ENCODE measurements at regions of chr1 and their contacts with region 1.

Region 1: GRCh38 chr1:206912445-206913095 is 9.2 kb downstream of the FCMR start:
- DNase-seq: peak in 1 of 3 donors; percentile 73
- ATAC-seq: peak; percentile 65 to 82 (median 69)
- H3K4me3 ChIP-seq: no peak overlapping the region
- H3K27ac ChIP-seq: no peak overlapping the region
- H3K4me1 ChIP-seq: peaks cover 0 to 5% (median 0%) of the 10 kb centered on the region in 4 donors
- H3K27me3 ChIP-seq: no peaks in the 10 kb centered on the region
- CTCF ChIP-seq: peak; percentile 88 to 89 (median 88)
- POLR2A ChIP-seq: no peak

Region 2: DNA sequence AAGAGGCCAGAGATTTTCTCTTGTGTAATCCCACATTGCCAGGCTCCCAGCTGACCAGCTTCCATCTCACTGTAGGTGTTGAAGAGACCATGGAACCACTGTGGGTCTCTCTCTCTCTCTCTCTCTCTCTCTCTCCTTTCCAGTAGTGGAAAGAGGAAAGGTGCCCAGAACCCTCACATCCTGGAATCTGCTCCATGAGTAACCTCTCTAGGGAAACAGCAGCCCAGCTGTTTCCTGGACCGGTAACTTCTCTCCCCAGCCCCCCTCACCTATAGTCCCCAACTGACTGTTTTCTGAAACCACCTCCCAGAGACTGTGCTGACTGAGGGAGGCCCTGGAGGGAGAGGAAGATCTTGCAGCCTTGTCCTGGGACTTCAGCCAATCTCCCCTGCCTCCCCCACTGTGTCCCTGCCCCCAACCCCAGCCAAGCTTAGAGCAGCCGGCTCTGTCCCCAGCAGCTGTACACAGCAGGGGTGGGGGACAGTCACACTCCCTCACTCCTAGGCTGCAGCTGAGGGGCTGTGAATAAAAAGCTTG is 1211.6 kb before region 1 on chr1:
- intact Hi-C with region 1: no loop called
- DNase-seq: no peak
- ATAC-seq: peak in 3 of 4 donors; percentile 13 to 30 (median 24)
- H3K4me3 ChIP-seq: no peak overlapping the region
- H3K27ac ChIP-seq: no peak overlapping the region
- H3K4me1 ChIP-seq: peaks cover 0 to 72% (median 12%) of the 10 kb centered on the region in 4 donors
- H3K27me3 ChIP-seq: no peaks in the 10 kb centered on the region
- CTCF ChIP-seq: no peak
- POLR2A ChIP-seq: no peak

Region 3: DNA sequence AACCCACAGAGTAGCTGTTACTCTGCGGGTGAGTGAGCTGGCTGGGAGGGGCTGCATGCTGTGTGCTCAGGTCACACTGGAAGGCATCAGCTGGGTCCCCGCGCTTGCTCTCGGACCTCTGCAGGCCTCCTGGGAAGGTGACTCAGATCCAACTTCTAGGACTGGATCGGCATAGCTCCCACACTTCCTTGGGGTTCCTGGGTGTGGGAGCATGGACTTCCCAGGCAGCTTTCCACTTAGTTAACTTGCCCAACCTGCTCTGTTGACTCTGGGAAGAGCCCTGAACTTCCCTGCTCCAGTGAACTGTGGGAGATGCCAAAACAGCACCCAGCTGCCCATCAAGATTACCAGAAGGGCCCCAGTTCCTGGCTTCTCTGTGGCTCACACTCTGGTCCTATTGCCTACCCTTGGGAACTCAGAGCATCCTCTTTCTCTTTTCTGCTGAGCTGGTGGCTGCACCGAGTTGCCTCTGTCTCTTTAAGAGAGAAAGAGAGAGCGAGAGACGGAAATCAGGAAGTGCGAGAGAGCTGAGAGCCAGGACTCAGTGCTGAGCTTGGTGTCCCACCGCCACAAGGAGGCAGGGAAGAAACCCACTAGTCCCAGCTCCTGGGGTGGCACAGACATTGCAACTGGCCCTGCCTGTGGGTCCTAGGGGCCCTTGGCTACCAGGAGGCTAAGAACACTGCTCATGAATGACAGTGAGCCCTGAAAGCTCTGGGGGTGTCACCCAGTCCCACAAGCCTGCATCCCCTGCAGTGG is 442.5 kb before region 1 on chr1 and contains the start of gene IKBKE:
- intact Hi-C with region 1: loop called in 1 of 2 experiments (anchors 10 kb)
- DNase-seq: peak in 2 of 3 donors; percentile 44 to 54
- ATAC-seq: peak; percentile 73 to 83 (median 77)
- H3K4me3 ChIP-seq: peak within 1 kb of the TSS; percentile 45 to 55 (median 55)
- H3K27ac ChIP-seq: peak within 1 kb of the TSS in 1 of 3 donors; percentile 34
- H3K4me1 ChIP-seq: peaks cover 0 to 10% (median 0%) of the 10 kb centered on the region in 4 donors
- H3K27me3 ChIP-seq: no peaks in the 10 kb centered on the region
- CTCF ChIP-seq: peak in 1 of 4 donors; percentile 12
- POLR2A ChIP-seq: peak; percentile 39
- total RNA-seq, gene IKBKE: 0.86 to 2.7 (median 1.9) TPM

Region 4: DNA sequence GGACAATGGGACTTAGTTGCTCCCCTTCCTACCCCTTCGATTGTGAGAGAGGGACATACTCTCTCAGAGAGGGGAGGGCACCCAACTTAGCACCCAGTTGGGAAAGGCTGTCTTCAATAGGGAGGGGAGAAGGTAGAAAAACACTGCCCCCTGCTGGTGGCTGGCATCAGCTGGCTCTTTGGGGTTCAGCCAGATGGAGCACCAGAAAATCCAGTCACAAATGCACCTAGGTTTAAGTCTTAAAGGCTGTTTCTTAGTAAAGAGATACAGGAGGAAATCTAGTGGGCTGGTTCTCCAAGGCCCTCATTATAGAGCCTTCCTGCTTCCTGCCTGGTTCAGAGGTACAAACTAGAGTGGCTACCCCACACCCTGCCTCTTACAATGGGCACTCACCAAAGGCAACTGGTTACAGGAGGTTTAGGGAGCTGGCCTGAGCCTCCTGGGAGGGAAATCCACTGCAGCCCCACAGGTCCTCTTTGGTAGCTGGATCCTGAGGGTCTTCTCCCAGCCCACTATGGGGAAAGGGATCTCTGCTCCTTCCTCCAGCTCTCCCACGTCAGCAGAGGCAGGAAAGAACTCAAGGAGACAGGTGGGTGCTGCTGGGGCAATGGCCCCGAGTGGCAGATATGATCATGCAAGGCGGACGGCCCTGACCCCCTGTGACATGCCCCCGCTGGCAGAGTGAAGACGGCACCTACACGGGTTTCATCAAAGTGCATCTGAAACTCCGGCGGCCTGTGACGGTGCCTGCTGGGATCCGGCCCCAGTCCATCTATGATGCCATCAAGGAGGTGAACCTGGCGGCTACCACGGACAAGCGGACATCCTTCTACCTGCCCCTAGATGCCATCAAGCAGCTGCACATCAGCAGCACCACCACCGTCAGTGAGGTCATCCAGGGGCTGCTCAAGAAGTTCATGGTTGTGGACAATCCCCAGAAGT is 328.6 kb before region 1 on chr1:
- intact Hi-C with region 1: no loop called
- DNase-seq: peak; percentile 71 to 82 (median 72)
- ATAC-seq: peak; percentile 55 to 74 (median 70)
- H3K4me3 ChIP-seq: no peak overlapping the region
- H3K27ac ChIP-seq: no peak overlapping the region
- H3K4me1 ChIP-seq: no peaks in the 10 kb centered on the region
- H3K27me3 ChIP-seq: no peaks in the 10 kb centered on the region
- CTCF ChIP-seq: peak; percentile 89 to 93 (median 91)
- POLR2A ChIP-seq: no peak

Region 5: DNA sequence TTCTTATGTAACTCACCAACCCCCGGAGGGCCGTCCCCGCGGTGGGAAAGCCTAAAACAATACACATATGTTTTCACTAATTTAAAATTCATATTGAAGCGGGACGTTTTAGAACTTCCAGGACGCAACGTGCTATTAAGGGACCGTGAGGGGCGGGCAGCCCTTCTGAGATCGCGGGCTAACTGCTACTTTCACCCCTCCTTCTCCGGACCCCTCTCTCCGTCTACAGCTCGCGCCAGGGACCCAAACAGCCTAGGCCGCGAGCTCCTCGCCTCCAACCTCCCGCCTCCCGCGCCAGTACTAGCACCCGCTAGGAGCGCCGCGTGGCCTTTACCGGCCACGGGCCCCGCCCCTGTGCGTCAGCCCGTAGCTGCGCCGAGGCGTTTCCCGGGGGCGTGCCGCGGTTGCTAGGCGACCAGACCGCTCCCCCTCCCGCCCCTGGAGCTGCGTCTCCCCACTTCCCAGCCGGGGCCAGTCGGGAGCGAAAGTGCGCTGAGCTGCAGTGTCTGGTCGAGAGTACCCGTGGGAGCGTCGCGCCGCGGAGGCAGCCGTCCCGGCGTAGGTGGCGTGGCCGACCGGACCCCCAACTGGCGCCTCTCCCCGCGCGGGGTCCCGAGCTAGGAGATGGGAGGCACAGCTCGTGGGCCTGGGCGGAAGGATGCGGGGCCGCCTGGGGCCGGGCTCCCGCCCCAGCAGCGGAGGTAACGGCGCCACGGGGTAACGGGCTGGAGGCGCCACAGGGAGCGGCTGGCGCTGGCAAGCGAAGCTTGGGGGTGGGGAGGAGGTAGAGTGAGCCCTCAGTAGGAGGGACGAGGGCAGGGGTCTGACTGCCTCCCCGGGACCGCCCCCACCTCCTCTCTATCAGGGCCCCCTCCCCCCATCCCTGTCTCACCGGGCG is 277.2 kb before region 1 on chr1 and contains the start of gene DYRK3:
- intact Hi-C with region 1: loop called in 1 of 2 experiments (anchors 10 kb)
- DNase-seq: peak; percentile 98
- ATAC-seq: peak; percentile 97 to 98 (median 97)
- H3K4me3 ChIP-seq: peak within 1 kb of the TSS; percentile 82 to 91 (median 87)
- H3K27ac ChIP-seq: peak within 1 kb of the TSS; percentile 60 to 80 (median 68)
- H3K4me1 ChIP-seq: peaks cover 0 to 17% (median 0%) of the 10 kb centered on the region in 4 donors
- H3K27me3 ChIP-seq: no peaks in the 10 kb centered on the region
- CTCF ChIP-seq: peak in 1 of 4 donors; percentile 10
- POLR2A ChIP-seq: peak; percentile 96
- total RNA-seq, gene DYRK3: 2.8 to 5.6 (median 4.0) TPM

Region 6: DNA sequence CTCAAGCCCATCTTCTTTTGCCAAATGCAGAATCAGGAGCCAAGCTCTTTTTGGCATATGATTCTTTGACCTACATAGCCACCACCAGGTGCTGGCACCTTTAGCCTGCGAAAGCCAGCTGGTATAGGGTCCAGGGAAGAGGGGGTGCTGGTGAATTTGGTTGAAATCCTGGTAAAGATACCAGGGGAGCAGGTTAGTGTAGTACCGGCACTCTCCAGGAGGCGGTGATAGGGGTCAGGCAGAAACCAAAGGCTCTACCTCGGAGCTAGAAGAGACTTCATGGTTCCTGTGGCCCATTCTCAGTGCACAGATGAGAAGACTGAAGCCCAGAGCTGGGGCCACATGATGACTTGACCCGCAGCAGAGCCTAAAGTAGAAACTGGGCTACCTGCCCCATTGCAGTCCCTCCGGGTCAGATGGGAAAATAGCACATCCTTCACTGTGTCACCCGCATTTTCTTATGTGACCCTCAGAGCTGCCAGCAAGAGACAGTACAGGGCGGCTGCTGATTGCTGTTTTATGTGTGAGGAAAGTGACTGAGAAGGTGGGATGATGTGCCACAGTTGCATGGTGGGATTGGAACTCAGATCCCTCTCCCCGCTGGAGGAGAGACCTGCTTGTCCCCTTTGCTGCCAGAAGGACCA is 177.9 kb before region 1 on chr1:
- intact Hi-C with region 1: loop called (anchors 10 kb)
- DNase-seq: no peak
- ATAC-seq: peak; percentile 53 to 64 (median 54)
- H3K4me3 ChIP-seq: no peak overlapping the region
- H3K27ac ChIP-seq: no peak overlapping the region
- H3K4me1 ChIP-seq: peaks cover 0 to 12% (median 0%) of the 10 kb centered on the region in 4 donors
- H3K27me3 ChIP-seq: no peaks in the 10 kb centered on the region
- CTCF ChIP-seq: peak; percentile 52 to 70 (median 58)
- POLR2A ChIP-seq: no peak

Region 7: GRCh38 chr1:206784471-206784903 is 128.1 kb before region 1 on chr1:
- intact Hi-C with region 1: no loop called
- DNase-seq: no peak
- ATAC-seq: peak in 1 of 4 donors; percentile 36
- H3K4me3 ChIP-seq: no peak overlapping the region
- H3K27ac ChIP-seq: no peak overlapping the region
- H3K4me1 ChIP-seq: no peaks in the 10 kb centered on the region
- H3K27me3 ChIP-seq: no peaks in the 10 kb centered on the region
- CTCF ChIP-seq: no peak
- POLR2A ChIP-seq: no peak

Region 8: DNA sequence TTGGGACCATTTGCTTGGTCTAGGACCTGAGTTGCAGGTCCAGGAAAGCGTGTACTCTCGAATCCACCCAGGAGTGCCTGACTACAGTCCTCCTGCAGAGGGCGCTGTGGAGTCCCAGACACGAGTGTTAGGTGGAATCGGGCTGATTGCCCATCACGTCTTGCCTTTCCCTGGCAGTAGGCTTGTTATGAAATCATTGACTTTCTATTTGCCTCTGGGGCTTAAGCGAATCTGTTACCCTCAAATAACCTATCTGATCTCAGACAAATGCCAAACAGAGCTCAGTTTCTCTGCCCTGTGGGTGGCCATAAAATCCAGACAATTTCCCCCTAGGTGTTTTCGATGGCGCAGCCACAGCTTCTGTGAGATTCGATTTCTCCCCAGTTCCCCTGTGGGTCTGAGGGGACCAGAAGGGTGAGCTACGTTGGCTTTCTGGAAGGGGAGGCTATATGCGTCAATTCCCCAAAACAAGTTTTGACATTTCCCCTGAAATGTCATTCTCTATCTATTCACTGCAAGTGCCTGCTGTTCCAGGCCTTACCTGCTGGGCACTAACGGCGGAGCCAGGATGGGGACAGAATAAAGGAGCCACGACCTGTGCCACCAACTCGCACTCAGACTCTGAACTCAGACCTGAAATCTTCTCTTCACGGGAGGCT is 47.4 kb before region 1 on chr1 and contains the start of gene IL20:
- intact Hi-C with region 1: loop called in 1 of 2 experiments (anchors 10 kb)
- DNase-seq: peak; percentile 92 to 95 (median 92)
- ATAC-seq: peak; percentile 98 to 100 (median 98)
- H3K4me3 ChIP-seq: no peak within 1 kb of the TSS
- H3K27ac ChIP-seq: peak within 1 kb of the TSS in 1 of 3 donors; percentile 3
- H3K4me1 ChIP-seq: peaks cover 0 to 4% (median 2%) of the 10 kb centered on the region in 4 donors
- H3K27me3 ChIP-seq: no peaks in the 10 kb centered on the region
- CTCF ChIP-seq: peak; percentile 91 to 99 (median 96)
- POLR2A ChIP-seq: no peak
- total RNA-seq, gene IL20: not detected

Region 9: DNA sequence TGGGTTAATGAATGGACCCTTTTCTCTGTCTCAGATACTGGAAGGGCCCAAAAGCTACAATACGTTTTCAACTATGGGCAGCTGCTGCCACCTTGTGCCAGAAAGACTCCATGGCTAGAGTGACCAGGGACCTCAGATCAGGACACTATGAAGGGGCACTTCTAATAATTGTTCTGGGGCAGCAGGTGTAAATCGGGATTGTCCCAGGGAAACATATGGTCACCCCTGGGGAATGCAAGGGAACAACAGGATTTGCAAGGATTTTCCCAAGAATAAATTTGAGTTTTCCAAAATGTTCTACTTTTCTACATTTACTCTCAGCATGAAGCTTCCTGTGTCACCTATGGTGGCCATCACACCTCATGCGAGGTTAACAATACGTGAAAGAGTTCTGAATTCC is 69.6 kb after region 1 on chr1:
- intact Hi-C with region 1: no loop called
- DNase-seq: peak in 2 of 3 donors; percentile 44 to 58
- ATAC-seq: peak; percentile 92 to 94 (median 92)
- H3K4me3 ChIP-seq: no peak overlapping the region
- H3K27ac ChIP-seq: no peak overlapping the region
- H3K4me1 ChIP-seq: no peaks in the 10 kb centered on the region
- H3K27me3 ChIP-seq: no peaks in the 10 kb centered on the region
- CTCF ChIP-seq: peak; percentile 77 to 89 (median 82)
- POLR2A ChIP-seq: no peak

Measured in right lobe of liver (tissue), 6 donors.